Testis (tissue), 5 donors: ENCODE measurements at regions of chr21 and their contacts with region 1.

Region 1: GRCh38 chr21:31198575-31198974 is 145.5 kb downstream of the TIAM1 start:
- DNase-seq: no peak
- H3K4me3 ChIP-seq: no peak overlapping the region
- H3K27ac ChIP-seq: no peak overlapping the region
- H3K4me1 ChIP-seq: peaks cover 22% of the 10 kb centered on the region
- H3K27me3 ChIP-seq: no peaks in the 10 kb centered on the region
- CTCF ChIP-seq: peak; percentile 70 to 77 (median 72)
- POLR2A ChIP-seq: no peak

Region 2: DNA sequence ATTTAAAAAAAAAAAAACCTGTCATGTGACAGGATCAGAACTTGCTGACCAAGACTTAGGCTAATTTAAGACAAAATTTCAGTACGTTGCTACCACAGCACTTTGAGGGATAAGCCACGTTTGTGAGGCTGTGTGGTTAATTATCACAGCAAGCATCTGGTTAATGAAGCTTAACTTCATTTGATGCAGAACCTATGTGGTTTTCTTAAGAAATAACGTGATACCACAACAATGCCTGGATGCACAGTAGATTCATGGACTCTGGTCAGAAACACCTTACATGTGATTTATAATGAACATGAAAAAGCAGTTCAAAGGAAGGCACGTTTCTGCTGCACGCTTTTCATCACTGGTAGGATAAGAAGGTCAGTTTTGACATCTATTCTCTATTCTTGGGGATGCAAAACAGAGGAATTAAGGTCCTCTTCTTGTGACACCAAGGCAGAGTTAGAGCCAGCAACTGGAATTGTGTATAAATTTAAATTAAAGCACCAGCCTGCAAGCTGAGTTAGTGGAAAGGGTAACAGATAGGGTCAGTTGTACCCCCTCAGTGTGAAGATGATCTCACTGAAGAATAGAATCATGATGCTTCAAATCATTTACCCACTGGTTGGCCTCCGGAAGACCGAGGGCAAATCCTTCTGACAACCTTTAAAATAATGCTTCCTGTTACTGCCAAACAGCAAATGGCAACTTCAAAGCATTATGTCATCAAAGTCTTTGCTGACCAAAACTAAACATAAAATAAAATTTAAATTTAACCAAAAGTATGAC is 379.6 kb before region 1 on chr21:
- intact Hi-C with region 1: no loop called
- DNase-seq: no peak
- H3K4me3 ChIP-seq: no peak overlapping the region
- H3K27ac ChIP-seq: no peak overlapping the region
- H3K4me1 ChIP-seq: no peaks in the 10 kb centered on the region
- H3K27me3 ChIP-seq: no peaks in the 10 kb centered on the region
- CTCF ChIP-seq: no peak
- POLR2A ChIP-seq: no peak

Region 3: DNA sequence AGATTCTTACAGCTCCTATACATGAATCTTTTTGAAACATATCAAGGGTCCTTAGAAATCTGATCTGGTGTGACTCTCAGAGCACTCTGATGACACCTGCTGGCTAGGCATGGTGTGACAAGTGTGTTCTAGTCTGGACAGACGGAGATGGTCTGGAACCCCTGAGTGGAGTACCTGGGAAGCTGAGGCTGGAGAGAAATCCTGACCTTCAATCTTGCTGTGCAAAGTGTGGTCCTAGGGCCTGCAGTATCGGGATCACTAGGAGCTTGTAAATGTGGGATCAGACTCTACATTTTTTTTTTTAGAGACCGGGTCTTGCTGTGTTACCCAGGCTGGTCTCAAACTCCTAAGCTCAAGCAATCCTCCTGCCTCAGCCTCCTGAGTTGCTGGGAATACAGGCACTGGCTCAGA is 382.3 kb after region 1 on chr21:
- intact Hi-C with region 1: loop called (anchors 5 kb)
- DNase-seq: peak; percentile 88
- H3K4me3 ChIP-seq: no peak overlapping the region
- H3K27ac ChIP-seq: no peak overlapping the region
- H3K4me1 ChIP-seq: no peaks in the 10 kb centered on the region
- H3K27me3 ChIP-seq: no peaks in the 10 kb centered on the region
- CTCF ChIP-seq: peak; percentile 58 to 79 (median 75)
- POLR2A ChIP-seq: no peak